ENCODE measurements at regions of chr7 and their contacts with region 1.

Region 1: GRCh38 chr7:16091701-16092310 is 329.5 kb downstream of the CRPPA start:
- DNase-seq: peak; percentile 53
- H3K4me3 ChIP-seq: no peak overlapping the region
- H3K27ac ChIP-seq: peak overlapping the region; percentile 48
- H3K4me1 ChIP-seq: peaks cover 21% of the 10 kb centered on the region
- H3K27me3 ChIP-seq: no peaks in the 10 kb centered on the region
- CTCF ChIP-seq: no peak
- POLR2A ChIP-seq: no peak

Region 2: DNA sequence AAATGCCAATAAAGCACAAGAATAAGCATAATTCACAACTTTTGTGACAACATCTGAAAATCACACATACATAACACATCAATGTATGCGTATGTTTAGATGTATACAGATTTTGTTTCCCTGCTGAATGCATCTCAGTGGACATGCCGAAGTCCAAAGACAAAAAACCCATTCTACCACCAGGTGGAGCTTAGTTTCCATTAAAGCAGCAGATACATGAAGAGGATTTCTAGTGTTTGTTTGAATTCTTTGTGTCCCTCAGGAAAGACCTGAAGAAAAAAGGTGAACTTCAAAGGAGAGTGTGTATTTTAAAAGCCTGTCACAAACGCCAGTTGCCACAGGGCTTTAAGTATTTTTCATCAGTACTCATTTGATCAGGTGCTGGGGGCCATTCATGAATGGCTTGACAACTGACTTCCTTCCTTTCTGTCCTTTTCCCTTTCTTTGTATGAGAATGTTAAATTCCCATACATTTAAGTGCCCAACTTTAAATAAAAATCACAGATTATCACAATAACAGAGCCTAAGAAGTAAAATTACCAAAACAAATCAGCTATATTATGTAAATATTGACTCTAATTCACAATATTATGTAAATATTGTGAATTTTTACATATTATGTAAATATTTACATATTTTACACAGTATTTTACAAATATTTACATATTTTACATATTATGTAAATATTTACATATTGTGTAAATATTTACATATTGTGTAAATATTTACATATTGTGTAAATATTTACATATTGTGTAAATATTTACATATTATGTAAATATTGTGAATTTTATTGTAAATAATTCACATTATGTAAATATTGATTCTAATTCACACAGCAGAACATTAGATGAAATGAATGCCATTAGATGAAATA is 13.5 kb before region 1 on chr7:
- CTCF ChIA-PET with region 1: interaction called, 126 read pairs
- POLR2A ChIA-PET with region 1: no interaction called
- dilution Hi-C with region 1: no loop called
- intact Hi-C with region 1: no loop called
- DNase-seq: peak; percentile 84
- H3K4me3 ChIP-seq: no peak overlapping the region
- H3K27ac ChIP-seq: peak overlapping the region; percentile 49
- H3K4me1 ChIP-seq: peaks cover 7% of the 10 kb centered on the region
- H3K27me3 ChIP-seq: no peaks in the 10 kb centered on the region
- CTCF ChIP-seq: peak; percentile 54 to 60
- POLR2A ChIP-seq: no peak

Measured in endothelial cell of umbilical vein (primary cell).